K562 (cell line): ENCODE measurements at regions of chr9 and their contacts with region 1.

Region 1: DNA sequence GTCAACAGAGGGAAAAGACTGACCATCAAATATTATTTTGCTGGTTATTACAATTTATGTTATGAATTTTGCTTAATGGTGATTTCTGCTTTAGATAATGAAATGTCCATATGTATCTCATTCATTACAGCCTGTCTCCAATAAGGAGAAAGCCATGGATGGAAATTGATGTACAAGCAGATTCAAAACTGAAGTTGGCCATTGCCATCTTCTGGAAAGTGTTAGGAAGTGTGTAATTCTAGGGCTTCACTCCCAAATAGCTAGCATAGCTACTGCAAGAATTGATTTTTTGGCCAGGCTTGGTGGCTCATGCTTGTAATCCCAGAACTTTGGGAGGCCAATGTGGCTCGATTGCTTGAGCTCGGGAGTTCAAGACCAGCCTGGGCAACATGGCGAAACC is 45.8 kb downstream of the DYNC2I2 start:
- DNase-seq: no peak
- ATAC-seq: peak; percentile 50; the same call in 1 of the 3 replicates
- H3K4me3 ChIP-seq: no peak overlapping the region
- H3K27ac ChIP-seq: no peak overlapping the region
- H3K4me1 ChIP-seq: no peaks in the 10 kb centered on the region
- H3K27me3 ChIP-seq: no peaks in the 10 kb centered on the region
- CTCF ChIP-seq: peak; percentile 15 to 64 (median 28); a peak in 3 of 6 replicates
- EP300 ChIP-seq: no peak
- POLR2A ChIP-seq: no peak
- RAD21 ChIP-seq: peak; percentile 42 to 72

Region 2: DNA sequence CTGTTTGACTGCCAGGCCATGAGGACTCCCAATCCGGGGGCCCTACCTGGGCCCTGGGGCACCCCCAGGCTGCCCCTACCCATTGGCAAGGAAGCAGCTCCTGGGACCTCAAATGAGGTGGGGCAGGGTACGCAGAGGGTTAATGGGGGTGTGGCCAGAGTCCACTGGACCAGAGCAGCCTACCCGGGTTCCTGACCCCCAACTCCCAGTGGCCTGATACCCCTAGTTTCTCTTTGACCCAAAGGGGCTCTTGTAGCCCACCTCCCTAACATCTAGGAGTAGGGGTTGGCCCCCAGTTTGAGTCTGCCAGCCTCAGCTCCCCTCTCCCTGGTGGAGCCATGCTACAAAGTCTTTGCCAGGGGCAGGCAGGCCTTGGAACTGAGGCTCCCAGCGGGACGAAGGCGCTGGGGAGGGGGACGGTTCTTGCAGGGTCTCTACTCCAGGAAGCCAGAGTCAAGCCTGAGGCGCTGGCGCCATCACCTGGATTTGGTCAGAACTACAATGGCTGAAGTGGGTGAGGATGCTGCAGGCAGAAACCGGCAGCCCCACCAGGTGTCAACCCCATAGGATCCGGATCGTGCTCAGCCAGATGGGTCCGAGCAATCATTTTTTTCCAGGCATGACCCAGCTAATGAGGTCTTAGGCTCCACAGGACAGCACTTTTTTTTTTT is 198.6 kb before region 1 on chr9:
- CTCF ChIA-PET with region 1: no interaction called
- POLR2A ChIA-PET with region 1: no interaction called
- in situ Hi-C with region 1: no loop called
- intact Hi-C with region 1: loop called (anchors 10 kb)
- DNase-seq: peak; percentile 55 to 81 (median 68)
- ATAC-seq: peak; percentile 88
- H3K4me3 ChIP-seq: no peak overlapping the region
- H3K27ac ChIP-seq: no peak overlapping the region
- H3K4me1 ChIP-seq: peaks cover 9 to 23% of the 10 kb centered on the region in 2 experiments; a peak in 4 of 5 replicates
- H3K27me3 ChIP-seq: no peaks in the 10 kb centered on the region; a peak in 1 of 5 replicates
- CTCF ChIP-seq: peak; percentile 89 to 94 (median 91)
- EP300 ChIP-seq: no peak
- POLR2A ChIP-seq: no peak
- RAD21 ChIP-seq: peak; percentile 76 to 91

Region 3: GRCh38 chr9:128438343-128439109 is 172.4 kb before region 1 on chr9:
- CTCF ChIA-PET with region 1: interaction called, 10 read pairs
- POLR2A ChIA-PET with region 1: no interaction called
- in situ Hi-C with region 1: no loop called
- intact Hi-C with region 1: loop called (anchors 2 kb)
- DNase-seq: peak; percentile 86 to 92 (median 88)
- ATAC-seq: peak; percentile 97
- H3K4me3 ChIP-seq: no peak overlapping the region
- H3K27ac ChIP-seq: no peak overlapping the region
- H3K4me1 ChIP-seq: peaks cover 3 to 25% of the 10 kb centered on the region in 2 experiments; a peak in 4 of 5 replicates
- H3K27me3 ChIP-seq: no peaks in the 10 kb centered on the region
- CTCF ChIP-seq: peak; percentile 88 to 92 (median 90)
- EP300 ChIP-seq: no peak
- POLR2A ChIP-seq: no peak
- RAD21 ChIP-seq: peak; percentile 72 to 87

Region 4: GRCh38 chr9:128504485-128505413 is 106.1 kb before region 1 on chr9 and contains the start of gene GLE1:
- CTCF ChIA-PET with region 1: no interaction called
- POLR2A ChIA-PET with region 1: no interaction called
- in situ Hi-C with region 1: no loop called
- intact Hi-C with region 1: loop called (anchors 10 kb)
- DNase-seq: peak; percentile 97 to 100 (median 98)
- ATAC-seq: peak; percentile 97
- H3K4me3 ChIP-seq: peak within 1 kb of the TSS; percentile 69
- H3K27ac ChIP-seq: peak within 1 kb of the TSS; percentile 86
- H3K4me1 ChIP-seq: peaks cover 6 to 11% of the 10 kb centered on the region in 2 experiments; a peak in 4 of 5 replicates
- H3K27me3 ChIP-seq: no peaks in the 10 kb centered on the region
- CTCF ChIP-seq: peak in 1 of 3 experiments; percentile 24; a peak in 1 of 6 replicates
- EP300 ChIP-seq: no peak
- POLR2A ChIP-seq: peak; percentile 90
- RAD21 ChIP-seq: no peak
- polyA plus RNA-seq, gene GLE1: 15.9 to 19.8 TPM

Region 5: DNA sequence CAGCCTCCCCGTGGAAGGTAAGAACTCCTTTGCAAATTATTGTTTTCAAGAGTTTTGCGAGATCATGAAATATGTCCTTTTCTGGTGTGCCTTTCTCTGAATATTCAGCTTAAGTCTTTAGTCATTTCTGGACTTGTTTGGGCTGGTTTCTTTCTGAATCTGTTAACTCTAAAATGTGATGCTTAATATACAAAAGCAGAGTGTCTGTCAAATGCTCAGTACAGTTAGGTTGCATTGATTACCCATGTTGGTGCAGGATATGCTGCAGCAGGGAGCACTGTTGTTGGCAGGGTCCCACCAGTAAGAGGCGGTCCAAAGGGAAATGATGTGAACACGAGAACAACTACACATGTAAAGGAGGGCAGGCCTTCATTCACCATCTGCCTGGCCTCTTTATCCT is 10.8 kb before region 1 on chr9:
- CTCF ChIA-PET with region 1: no interaction called
- POLR2A ChIA-PET with region 1: interaction called, 10 read pairs
- in situ Hi-C with region 1: no loop called
- intact Hi-C with region 1: no loop called
- DNase-seq: no peak
- ATAC-seq: no peak
- H3K4me3 ChIP-seq: no peak overlapping the region
- H3K27ac ChIP-seq: no peak overlapping the region
- H3K4me1 ChIP-seq: peaks cover 0 to 3% of the 10 kb centered on the region in 2 experiments; a peak in 1 of 5 replicates
- H3K27me3 ChIP-seq: no peaks in the 10 kb centered on the region
- CTCF ChIP-seq: no peak
- EP300 ChIP-seq: no peak
- POLR2A ChIP-seq: no peak
- RAD21 ChIP-seq: no peak